ENCODE measurements at regions of chr11 and their contacts with region 1.

Region 1: DNA sequence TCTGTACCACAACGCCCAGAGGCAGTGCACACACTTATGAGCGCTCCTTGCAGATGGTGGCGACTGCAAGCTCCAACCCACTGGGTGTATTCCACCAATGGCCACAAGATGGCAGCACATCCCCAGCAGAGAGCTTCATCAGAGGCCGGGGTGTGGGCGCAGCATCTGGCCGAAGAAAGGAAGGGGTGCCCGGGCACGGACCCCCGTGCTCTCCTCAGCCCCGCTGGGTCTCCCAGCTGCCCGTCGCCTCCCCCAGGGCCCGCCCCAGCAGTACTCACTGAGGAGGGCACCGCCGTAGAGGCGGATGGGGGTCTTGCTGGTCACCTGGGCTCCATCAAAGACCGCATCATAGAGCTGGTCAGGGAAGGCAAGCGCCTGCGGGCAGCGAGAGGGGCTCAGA is 14.2 kb downstream of the TP53I11 start:
- DNase-seq: peak; percentile 86
- ATAC-seq: peak; percentile 87
- H3K4me3 Mint-ChIP-seq: no peak overlapping the region
- H3K27ac Mint-ChIP-seq: no peak overlapping the region
- H3K4me1 Mint-ChIP-seq: no peaks in the 10 kb centered on the region
- H3K27me3 Mint-ChIP-seq: no peaks in the 10 kb centered on the region

Region 2: DNA sequence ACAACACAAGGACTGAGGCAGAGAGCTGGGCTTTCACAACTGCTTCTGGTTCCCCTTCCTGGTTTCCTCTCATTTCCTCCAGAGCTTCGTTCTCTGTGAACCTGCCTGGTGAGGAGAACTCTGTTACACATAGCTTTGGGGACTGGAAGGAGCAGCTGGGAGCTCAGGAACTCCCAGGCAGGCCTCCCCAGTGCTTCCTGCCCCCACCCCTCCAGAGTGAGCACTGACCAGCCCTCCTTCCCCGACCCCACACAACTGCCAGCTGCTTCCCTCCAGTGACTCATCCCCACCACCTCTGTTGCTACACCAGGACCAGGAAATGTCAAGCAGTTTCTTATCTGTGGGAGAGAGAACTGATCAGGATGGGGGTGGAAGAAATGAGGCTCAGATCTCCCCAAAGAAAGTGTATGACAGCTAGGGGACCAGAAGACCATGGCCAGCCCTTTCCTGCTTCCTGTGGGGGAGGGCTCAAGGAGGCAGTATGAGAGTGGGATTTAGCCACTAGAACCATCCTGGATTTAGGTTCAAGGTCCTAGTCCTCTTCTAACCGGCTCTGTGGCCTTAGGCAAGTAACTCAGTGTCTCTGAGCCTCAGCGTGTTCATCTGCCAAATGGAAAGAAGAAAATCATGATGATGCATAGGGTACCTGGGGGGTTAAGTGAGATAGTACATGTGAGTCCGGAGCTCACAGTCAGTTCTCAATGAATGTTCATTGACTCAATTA is 18.7 kb after region 1 on chr11:
- CTCF ChIA-PET with region 1: interaction called, 12 read pairs
- DNase-seq: no peak
- ATAC-seq: no peak
- H3K4me3 Mint-ChIP-seq: no peak overlapping the region
- H3K27ac Mint-ChIP-seq: no peak overlapping the region
- H3K4me1 Mint-ChIP-seq: peaks cover 12% of the 10 kb centered on the region
- H3K27me3 Mint-ChIP-seq: peaks cover 6% of the 10 kb centered on the region

Region 3: GRCh38 chr11:44968510-44968909 is 32.0 kb after region 1 on chr11:
- CTCF ChIA-PET with region 1: interaction called, 11 read pairs
- DNase-seq: no peak
- ATAC-seq: no peak
- H3K4me3 Mint-ChIP-seq: no peak overlapping the region
- H3K27ac Mint-ChIP-seq: no peak overlapping the region
- H3K4me1 Mint-ChIP-seq: no peaks in the 10 kb centered on the region
- H3K27me3 Mint-ChIP-seq: no peaks in the 10 kb centered on the region

Region 4: DNA sequence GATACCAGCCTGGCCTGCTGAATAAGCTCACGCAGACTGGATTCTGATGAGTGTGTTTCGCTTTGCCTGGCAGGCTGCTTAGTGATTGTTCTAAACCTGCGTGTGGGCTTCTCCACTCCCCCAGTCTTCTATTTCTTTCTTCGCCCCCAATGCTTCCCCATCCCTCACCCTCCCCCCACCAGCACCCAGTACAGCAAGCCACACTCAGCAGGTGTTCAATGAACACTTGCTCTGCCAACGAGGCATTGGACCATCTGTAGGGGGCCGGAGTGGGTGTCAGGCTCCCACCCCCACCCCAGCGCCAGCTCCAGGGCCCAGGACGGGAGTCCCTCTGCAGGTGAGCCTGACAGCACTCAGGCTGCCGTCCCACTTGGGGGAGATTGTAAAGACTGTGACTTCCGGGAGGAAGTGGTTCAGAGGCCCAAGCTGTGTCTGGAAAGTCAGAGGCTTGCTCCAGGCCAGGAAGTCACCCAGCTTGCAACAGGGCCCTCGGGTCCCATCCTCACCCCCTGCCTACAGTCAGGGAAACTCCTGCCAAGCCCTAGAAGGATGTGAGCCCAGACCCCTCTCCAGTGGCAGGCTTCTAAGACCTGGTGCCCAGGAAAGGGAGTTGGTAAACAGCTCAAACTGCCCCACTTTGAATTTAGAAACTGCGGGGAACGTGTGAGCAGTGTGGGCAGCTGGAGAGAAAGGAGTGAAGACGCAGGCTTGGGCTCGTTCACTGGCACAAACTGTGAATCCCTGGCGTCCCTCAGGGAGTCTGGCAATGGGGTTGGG is 143.6 kb after region 1 on chr11:
- CTCF ChIA-PET with region 1: interaction called, 21 read pairs
- DNase-seq: peak; percentile 83
- ATAC-seq: peak; percentile 94
- H3K4me3 Mint-ChIP-seq: no peak overlapping the region
- H3K27ac Mint-ChIP-seq: peak overlapping the region; percentile 88
- H3K4me1 Mint-ChIP-seq: peaks cover 51% of the 10 kb centered on the region
- H3K27me3 Mint-ChIP-seq: no peaks in the 10 kb centered on the region